ENCODE measurements at regions of chr20 and their contacts with region 1.

Region 1: DNA sequence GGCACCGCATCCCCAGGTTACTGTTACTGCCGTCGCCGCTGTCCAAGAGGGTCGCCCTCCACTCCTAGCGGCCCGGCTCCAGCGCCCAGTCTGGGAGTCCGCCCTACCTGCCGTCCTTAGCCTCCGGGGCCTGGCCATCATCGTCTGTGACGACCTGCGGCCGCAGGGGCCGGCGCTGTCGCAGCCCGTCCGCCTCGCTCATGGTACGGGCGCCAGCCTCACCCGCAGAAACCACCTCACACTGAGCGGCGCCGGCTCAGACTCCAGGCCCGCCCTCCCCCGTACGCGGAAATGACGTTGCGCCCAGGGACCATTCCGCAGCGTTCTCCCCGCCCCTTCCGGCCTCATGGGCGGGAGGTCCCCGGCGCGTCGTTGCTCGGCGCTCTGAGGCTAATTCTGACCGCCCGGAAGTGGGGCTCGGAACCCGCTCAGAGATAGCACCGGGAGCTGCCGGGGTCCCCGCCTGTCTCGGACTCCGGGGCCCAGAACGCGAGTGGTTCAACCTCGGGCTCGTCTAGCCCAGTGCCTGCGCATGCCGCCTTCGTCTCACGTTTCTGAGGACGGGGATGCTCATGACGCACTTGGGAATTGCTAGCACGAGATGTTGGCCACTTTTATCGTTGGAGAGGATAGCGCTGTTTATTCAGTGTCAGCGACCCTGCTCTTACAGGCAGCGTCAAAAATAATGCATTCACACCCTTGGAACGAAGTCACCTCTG is at the start of gene APMAP:
- DNase-seq: peak; percentile 91
- H3K4me3 ChIP-seq: peak within 1 kb of the TSS; percentile 85 to 98 (median 90)
- H3K27ac ChIP-seq: peak within 1 kb of the TSS; percentile 63
- H3K4me1 ChIP-seq: peaks cover 27% of the 10 kb centered on the region
- H3K27me3 ChIP-seq: no peaks in the 10 kb centered on the region
- CTCF ChIP-seq: no peak
- total RNA-seq, gene APMAP: 74.6 to 104 TPM

Region 2: GRCh38 chr20:24897974-24898373 is 94.7 kb before region 1 on chr20:
- CTCF ChIA-PET with region 1: no interaction called
- dilution Hi-C with region 1: no loop called
- in situ Hi-C with region 1: no loop called
- intact Hi-C with region 1: no loop called
- DNase-seq: no peak
- H3K4me3 ChIP-seq: no peak overlapping the region
- H3K27ac ChIP-seq: no peak overlapping the region
- H3K4me1 ChIP-seq: no peaks in the 10 kb centered on the region
- H3K27me3 ChIP-seq: no peaks in the 10 kb centered on the region
- CTCF ChIP-seq: no peak

Region 3: GRCh38 chr20:25057234-25058050 is 64.8 kb after region 1 on chr20:
- CTCF ChIA-PET with region 1: no interaction called
- dilution Hi-C with region 1: no loop called
- in situ Hi-C with region 1: loop called in 1 of 2 experiments (anchors 5 kb)
- intact Hi-C with region 1: no loop called
- DNase-seq: peak; percentile 56
- H3K4me3 ChIP-seq: peak overlapping the region; percentile 49 to 66 (median 62)
- H3K27ac ChIP-seq: no peak overlapping the region
- H3K4me1 ChIP-seq: peaks cover 17% of the 10 kb centered on the region
- H3K27me3 ChIP-seq: peaks cover 8% of the 10 kb centered on the region
- CTCF ChIP-seq: no peak

Region 4: DNA sequence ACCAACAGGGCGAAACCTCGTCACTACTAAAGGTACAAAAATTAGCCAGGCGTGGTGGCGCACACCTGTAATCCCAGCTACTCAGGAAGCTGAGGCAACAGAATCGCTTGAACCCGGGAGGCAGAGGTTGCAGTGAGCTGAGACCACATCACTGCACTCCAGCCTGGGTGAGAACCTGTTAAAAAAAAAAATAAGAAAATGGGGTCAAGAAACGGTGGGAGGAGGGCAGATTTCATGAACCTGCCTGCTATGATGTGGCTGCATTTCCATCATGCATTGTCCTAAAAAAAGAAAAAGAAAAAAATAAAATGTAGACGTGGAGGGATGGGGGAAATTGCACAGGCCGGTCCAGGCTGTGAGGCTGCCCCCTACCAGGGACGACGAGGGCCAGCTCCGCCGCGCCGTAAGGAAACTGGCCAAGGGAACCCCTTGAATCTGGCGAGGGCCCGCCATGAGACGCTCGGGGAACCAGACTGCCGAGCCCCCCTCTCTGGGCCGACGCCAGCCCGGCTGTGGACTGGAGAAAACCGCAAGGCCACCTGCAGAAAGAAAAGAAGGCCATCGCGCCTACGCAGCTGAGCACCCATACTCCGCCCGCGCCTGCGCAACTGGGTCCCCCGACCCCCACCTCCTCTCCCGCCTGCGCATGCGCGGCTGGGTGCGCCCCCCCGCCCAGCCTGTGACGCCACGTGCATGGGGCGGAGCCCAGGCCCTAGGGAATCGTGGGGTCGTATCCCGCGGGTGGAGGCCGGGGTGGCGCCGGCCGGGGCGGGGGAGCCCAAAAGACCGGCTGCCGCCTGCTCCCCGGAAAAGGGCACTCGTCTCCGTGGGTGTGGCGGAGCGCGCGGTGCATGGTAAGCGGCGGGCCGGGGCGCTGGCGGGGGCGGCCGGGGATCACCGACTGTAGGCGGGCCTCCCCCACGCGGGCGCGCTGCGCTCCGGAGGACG is 202.6 kb after region 1 on chr20 and contains the start of gene ENTPD6:
- CTCF ChIA-PET with region 1: interaction called, 6 read pairs
- dilution Hi-C with region 1: no loop called
- in situ Hi-C with region 1: loop called in 1 of 2 experiments (anchors 10 kb)
- intact Hi-C with region 1: loop called (anchors 5 kb)
- DNase-seq: peak; percentile 80
- H3K4me3 ChIP-seq: peak within 1 kb of the TSS; percentile 82 to 95 (median 91)
- H3K27ac ChIP-seq: peak within 1 kb of the TSS; percentile 51
- H3K4me1 ChIP-seq: peaks cover 11% of the 10 kb centered on the region
- H3K27me3 ChIP-seq: no peaks in the 10 kb centered on the region
- CTCF ChIP-seq: peak in 1 of 2 donors; percentile 18
- total RNA-seq, gene ENTPD6: 82.9 to 130 TPM

Region 5: GRCh38 chr20:25299806-25300205 is 307.2 kb after region 1 on chr20:
- CTCF ChIA-PET with region 1: no interaction called
- dilution Hi-C with region 1: no loop called
- in situ Hi-C with region 1: no loop called
- intact Hi-C with region 1: loop called (anchors 5 kb)
- DNase-seq: peak; percentile 59
- H3K4me3 ChIP-seq: no peak overlapping the region
- H3K27ac ChIP-seq: no peak overlapping the region
- H3K4me1 ChIP-seq: peaks cover 47% of the 10 kb centered on the region
- H3K27me3 ChIP-seq: no peaks in the 10 kb centered on the region
- CTCF ChIP-seq: peak in 1 of 2 donors; percentile 12

Region 6: GRCh38 chr20:25407311-25408169 is 414.9 kb after region 1 on chr20 and contains the start of gene GINS1:
- CTCF ChIA-PET with region 1: no interaction called
- dilution Hi-C with region 1: no loop called
- in situ Hi-C with region 1: loop called (anchors 10 kb)
- intact Hi-C with region 1: no loop called
- DNase-seq: peak; percentile 89
- H3K4me3 ChIP-seq: peak within 1 kb of the TSS; percentile 77 to 82 (median 78)
- H3K27ac ChIP-seq: peak within 1 kb of the TSS; percentile 73
- H3K4me1 ChIP-seq: peaks cover 11% of the 10 kb centered on the region
- H3K27me3 ChIP-seq: no peaks in the 10 kb centered on the region
- CTCF ChIP-seq: no peak
- total RNA-seq, gene GINS1: 5.7 to 16.8 TPM

Measured in mammary epithelial cell (primary cell).